GM12878 (cell line): ENCODE measurements at regions of chr19 and their contacts with region 1.

Region 1: DNA sequence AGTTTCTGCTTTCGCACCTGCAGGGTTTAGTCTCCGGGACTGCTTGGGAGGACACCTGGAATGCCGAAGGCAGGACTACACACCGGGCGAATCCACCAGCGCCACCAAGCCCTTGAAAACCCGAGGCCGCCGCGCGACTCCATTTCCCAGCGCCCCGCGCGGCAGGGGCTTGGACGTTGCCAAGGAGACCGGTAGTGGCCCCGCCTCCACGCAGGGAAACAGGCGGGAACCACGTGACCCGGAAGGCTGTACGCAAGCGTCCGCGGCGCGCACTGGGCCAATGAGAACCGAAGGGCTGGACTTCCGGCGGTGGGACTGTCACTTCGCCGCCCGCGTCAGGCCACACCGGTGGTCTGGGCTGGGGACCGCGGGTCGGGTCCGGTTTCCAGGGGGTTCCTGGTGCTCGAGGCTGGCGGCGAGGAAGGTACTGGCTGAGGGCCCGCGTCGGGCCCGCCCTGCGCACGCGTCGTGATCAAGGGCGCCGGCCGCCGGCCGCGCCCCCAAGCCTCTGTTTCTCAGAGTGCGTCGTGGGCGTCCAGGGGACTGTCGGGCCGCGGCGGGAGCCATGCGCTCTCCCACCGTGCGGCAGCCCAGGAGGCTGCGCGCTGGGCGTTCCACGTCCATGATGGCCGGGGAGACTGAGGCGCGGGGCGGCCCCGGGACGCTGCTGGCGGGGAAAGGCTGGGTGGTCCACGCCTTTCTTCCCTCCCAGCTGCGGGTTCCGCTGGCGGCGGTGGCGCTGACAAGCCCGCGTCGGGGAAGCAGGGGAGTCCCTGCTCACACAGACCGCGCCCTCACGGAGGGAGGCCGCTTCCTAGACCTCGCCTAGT is at the start of gene ZNF324:
- DNase-seq: peak; percentile 76
- ATAC-seq: peak; percentile 93
- H3K4me3 ChIP-seq: peak within 1 kb of the TSS; percentile 81
- H3K27ac ChIP-seq: peak within 1 kb of the TSS; percentile 51; the same call in 1 of the 2 replicates
- H3K4me1 ChIP-seq: peaks cover 14% of the 10 kb centered on the region
- H3K27me3 ChIP-seq: no peaks in the 10 kb centered on the region
- CTCF ChIP-seq: no peak
- EP300 ChIP-seq: no peak
- POLR2A ChIP-seq: peak; percentile 88
- RAD21 ChIP-seq: no peak
- polyA plus RNA-seq, gene ZNF324: 0.71 to 2.1 TPM

Region 2: DNA sequence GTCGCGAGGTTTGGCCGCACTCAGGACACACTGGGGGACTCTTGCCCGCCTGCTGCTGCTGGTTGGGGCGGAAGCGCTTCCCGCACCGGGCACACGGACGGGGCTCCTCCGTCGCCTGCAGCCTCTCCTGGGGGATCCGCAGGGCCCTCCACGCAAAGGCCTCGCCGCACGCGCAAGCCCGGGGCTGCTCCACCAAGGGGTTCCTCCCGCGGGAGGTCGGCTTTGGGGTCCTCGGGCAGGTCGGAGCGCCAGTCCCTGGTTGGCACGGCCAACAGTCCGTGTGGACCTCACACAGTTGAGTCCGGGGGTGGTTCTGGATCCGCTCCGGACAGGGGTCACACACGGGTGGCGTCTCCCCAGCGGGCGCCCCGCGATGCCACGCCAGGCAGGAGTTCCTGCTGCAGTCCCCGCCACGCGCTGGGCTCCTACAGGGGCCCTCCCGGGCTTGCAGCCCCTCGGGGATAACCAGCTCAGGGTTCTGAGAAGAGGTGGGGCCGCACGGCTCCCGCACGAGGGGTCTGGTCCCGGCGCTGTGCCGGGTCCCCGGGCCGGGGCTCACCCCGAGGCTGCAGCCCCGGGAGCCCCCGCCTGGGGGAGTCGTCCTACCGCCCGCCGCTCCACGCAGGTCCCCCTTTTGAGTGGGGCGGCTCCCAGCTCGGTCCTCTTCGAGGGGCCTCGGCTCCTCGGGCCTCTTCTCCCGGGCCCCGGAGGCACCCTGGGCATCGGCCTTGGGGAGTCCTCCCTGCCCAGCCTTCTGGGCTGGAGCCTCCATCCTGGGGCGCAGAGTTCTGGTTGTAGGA is 98.2 kb before region 1 on chr19:
- CTCF ChIA-PET with region 1: no interaction called
- POLR2A ChIA-PET with region 1: no interaction called
- RAD21 ChIA-PET with region 1: no interaction called
- SMC1A ChIA-PET with region 1: no interaction called
- in situ Hi-C with region 1: no loop called
- intact Hi-C with region 1: no loop called
- DNase-seq: no peak
- ATAC-seq: no peak
- H3K4me3 ChIP-seq: no peak overlapping the region
- H3K27ac ChIP-seq: no peak overlapping the region
- H3K4me1 ChIP-seq: peaks cover 7% of the 10 kb centered on the region
- H3K27me3 ChIP-seq: no peaks in the 10 kb centered on the region
- CTCF ChIP-seq: no peak
- EP300 ChIP-seq: no peak
- POLR2A ChIP-seq: no peak
- RAD21 ChIP-seq: no peak

Region 3: DNA sequence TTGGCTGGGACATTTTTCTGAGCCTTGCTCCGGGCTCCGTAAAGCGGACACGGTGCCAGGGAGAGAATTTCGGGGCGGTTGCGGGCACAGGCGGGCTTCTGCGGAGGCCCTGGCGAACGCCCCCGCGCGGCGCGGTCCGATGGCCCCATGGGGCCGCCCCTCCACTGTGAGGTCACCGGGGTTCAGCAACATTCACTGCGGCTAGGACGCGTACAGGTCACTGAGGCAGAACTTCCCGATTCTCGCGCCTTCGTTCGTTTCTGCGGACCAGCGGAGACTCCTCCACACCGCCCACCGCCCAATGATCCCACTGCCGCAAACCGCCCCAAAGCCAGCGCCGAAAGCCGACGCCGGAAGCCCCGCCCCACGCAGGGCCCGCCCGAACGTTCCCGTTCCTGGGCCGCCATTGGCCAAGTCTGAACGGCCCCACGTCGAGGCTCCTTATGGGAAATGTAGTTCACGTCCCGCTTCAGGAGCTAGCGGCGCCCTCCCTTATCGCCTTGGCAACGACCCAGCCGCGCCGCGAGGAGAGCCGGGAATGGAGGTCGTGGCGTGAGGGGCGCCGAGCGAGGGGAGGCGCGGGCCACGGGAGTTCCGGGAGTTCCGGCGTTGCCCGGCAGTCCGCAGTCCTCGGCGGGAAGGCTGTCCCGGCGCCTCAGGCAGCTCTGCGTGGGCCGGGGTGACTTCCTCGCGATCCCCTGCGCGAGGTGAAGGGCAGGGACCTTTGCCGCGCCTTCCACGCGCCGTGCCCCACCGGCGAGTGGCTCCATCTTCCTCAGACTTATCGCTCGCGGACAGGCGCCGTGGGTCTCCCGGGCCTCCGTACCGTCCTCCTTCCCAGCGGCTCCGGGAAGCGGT is 58.6 kb before region 1 on chr19 and contains the start of gene ZNF584:
- CTCF ChIA-PET with region 1: no interaction called
- POLR2A ChIA-PET with region 1: interaction called, 5 read pairs
- RAD21 ChIA-PET with region 1: interaction called, 5 read pairs
- SMC1A ChIA-PET with region 1: interaction called, 4 read pairs
- in situ Hi-C with region 1: no loop called
- intact Hi-C with region 1: loop called (anchors 5 kb)
- DNase-seq: peak; percentile 60
- ATAC-seq: peak; percentile 98
- H3K4me3 ChIP-seq: peak within 1 kb of the TSS; percentile 90
- H3K27ac ChIP-seq: peak within 1 kb of the TSS; percentile 80
- H3K4me1 ChIP-seq: peaks cover 8% of the 10 kb centered on the region
- H3K27me3 ChIP-seq: no peaks in the 10 kb centered on the region
- CTCF ChIP-seq: peak in 2 of 3 experiments; percentile 21 to 27; a peak in 2 of 6 replicates
- EP300 ChIP-seq: no peak
- POLR2A ChIP-seq: peak; percentile 95
- RAD21 ChIP-seq: no peak
- polyA plus RNA-seq, gene ZNF584: 2.0 to 2.6 TPM